PC-3 (cell line): ENCODE measurements at regions of chr12 and their contacts with region 1.

Region 1: GRCh38 chr12:14995583-14996425 is 23.0 kb downstream of the PDE6H start:
- DNase-seq: peak; percentile 54
- ATAC-seq: no peak; the same call in 1 of the 2 replicates
- H3K4me3 ChIP-seq: no peak overlapping the region
- H3K27ac ChIP-seq: no peak overlapping the region
- H3K4me1 ChIP-seq: peaks cover 12% of the 10 kb centered on the region
- H3K27me3 ChIP-seq: no peaks in the 10 kb centered on the region
- CTCF ChIP-seq: peak; percentile 62

Region 2: DNA sequence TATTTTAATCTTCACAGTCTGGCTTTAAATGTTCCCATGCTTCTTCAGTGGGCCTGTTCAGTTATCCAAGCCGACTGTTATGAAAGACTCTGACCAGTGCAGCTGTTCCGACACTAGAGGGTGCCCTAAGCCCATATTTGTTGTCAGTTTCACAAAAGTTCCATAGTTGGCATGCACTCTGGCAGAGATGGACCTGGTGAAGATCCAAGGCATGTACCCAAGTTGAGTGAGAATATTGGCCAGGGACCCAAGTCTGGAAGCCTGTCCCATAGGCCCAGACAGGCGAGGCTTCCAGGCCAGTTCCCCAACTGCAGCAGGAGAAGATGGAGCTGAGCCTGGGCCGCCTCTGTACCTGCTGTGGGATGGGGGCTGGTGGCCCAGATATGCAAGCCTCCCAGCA is 272.0 kb before region 1 on chr12:
- CTCF ChIA-PET with region 1: no interaction called
- POLR2A ChIA-PET with region 1: no interaction called
- intact Hi-C with region 1: loop called (anchors 1 kb)
- DNase-seq: peak; percentile 62
- ATAC-seq: peak; percentile 65
- H3K4me3 ChIP-seq: no peak overlapping the region
- H3K27ac ChIP-seq: no peak overlapping the region
- H3K4me1 ChIP-seq: no peaks in the 10 kb centered on the region
- H3K27me3 ChIP-seq: no peaks in the 10 kb centered on the region
- CTCF ChIP-seq: peak; percentile 68

Region 3: GRCh38 chr12:14776236-14776961 is 219.4 kb before region 1 on chr12:
- CTCF ChIA-PET with region 1: no interaction called
- POLR2A ChIA-PET with region 1: no interaction called
- intact Hi-C with region 1: loop called (anchors 1 kb)
- DNase-seq: peak; percentile 38
- ATAC-seq: no peak
- H3K4me3 ChIP-seq: peak overlapping the region; percentile 92
- H3K27ac ChIP-seq: peak overlapping the region; percentile 64
- H3K4me1 ChIP-seq: peaks cover 37% of the 10 kb centered on the region
- H3K27me3 ChIP-seq: no peaks in the 10 kb centered on the region
- CTCF ChIP-seq: peak; percentile 53

Region 4: DNA sequence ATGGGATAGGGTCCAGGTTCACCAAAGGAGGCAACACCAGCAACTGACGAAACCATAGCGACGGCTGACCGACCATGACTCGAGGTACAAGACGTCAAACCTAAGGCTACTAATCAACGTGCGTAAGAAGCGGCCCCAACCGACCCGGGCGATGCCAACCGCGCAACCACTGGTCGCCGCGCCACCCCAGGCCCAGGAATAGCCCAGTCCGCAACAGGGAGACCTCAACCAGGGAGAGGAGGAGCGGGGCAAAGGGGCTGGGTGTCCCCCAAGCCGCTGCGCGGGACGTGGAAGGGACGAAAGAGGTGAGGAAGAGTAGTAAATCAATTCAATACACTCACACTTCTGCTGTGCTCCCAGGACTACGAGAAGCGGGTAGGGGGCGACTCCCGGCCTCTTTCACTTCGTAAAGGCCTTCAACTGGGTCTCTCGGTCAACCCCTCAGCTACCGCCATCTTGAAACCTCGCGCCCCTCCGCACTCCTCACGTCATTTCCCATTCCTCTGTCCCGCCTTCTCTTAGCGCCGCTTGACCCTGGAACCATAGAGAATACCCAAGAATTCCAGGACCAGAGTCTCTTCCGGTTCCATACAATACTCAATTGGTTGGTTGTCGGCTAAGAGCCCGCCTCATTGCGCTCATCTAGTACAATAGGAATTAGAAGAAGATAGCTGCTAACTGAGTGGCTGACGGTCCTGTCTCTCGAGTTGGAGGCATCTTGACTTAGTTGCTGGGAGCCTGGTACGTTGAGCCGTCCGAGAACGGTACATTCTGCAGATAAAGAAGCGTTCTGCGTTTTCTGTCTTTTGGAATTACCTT is 192.6 kb before region 1 on chr12 and contains the starts of genes C12orf60 and WBP11:
- CTCF ChIA-PET with region 1: interaction called, 20 read pairs
- POLR2A ChIA-PET with region 1: no interaction called
- intact Hi-C with region 1: no loop called
- DNase-seq: peak; percentile 97
- ATAC-seq: peak; percentile 99
- H3K4me3 ChIP-seq: peak within 1 kb of the TSS; percentile 96
- H3K27ac ChIP-seq: peak within 1 kb of the TSS; percentile 37
- H3K4me1 ChIP-seq: peaks cover 10% of the 10 kb centered on the region; the same call in 1 of the 2 replicates
- H3K27me3 ChIP-seq: no peaks in the 10 kb centered on the region
- CTCF ChIP-seq: no peak
- total RNA-seq, gene C12orf60: 0.29 and 0.47 TPM in 2 replicates
- total RNA-seq, gene WBP11: 20.0 and 21.4 TPM in 2 replicates

Region 5: GRCh38 chr12:14810953-14811483 is 184.8 kb before region 1 on chr12:
- CTCF ChIA-PET with region 1: no interaction called
- POLR2A ChIA-PET with region 1: no interaction called
- intact Hi-C with region 1: loop called (anchors 1 kb)
- DNase-seq: peak; percentile 61
- ATAC-seq: peak; percentile 87
- H3K4me3 ChIP-seq: no peak overlapping the region
- H3K27ac ChIP-seq: no peak overlapping the region
- H3K4me1 ChIP-seq: no peaks in the 10 kb centered on the region
- H3K27me3 ChIP-seq: no peaks in the 10 kb centered on the region
- CTCF ChIP-seq: peak; percentile 77

Region 6: GRCh38 chr12:14913381-14913781 is 82.4 kb before region 1 on chr12:
- CTCF ChIA-PET with region 1: no interaction called
- POLR2A ChIA-PET with region 1: no interaction called
- intact Hi-C with region 1: no loop called
- DNase-seq: peak; percentile 65
- ATAC-seq: peak; percentile 53
- H3K4me3 ChIP-seq: no peak overlapping the region
- H3K27ac ChIP-seq: peak overlapping the region; percentile 36
- H3K4me1 ChIP-seq: peaks cover 27% of the 10 kb centered on the region
- H3K27me3 ChIP-seq: no peaks in the 10 kb centered on the region
- CTCF ChIP-seq: no peak

Region 7: GRCh38 chr12:14930299-14930698 is 65.5 kb before region 1 on chr12:
- CTCF ChIA-PET with region 1: interaction called, 3 read pairs
- POLR2A ChIA-PET with region 1: no interaction called
- intact Hi-C with region 1: loop called (anchors 2 kb)
- DNase-seq: peak; percentile 7
- ATAC-seq: no peak
- H3K4me3 ChIP-seq: no peak overlapping the region
- H3K27ac ChIP-seq: no peak overlapping the region
- H3K4me1 ChIP-seq: peaks cover 67% of the 10 kb centered on the region
- H3K27me3 ChIP-seq: no peaks in the 10 kb centered on the region
- CTCF ChIP-seq: no peak